Activated CD4-positive, alpha-beta T cell treated with anti-CD3 and anti-CD28 coated beads, Interleukin-2, amount 10 ng/mL, durations not matched to agents 7 days and 5 days (primary cell): ENCODE measurements at regions of chr2 and their contacts with region 1.

Region 1: DNA sequence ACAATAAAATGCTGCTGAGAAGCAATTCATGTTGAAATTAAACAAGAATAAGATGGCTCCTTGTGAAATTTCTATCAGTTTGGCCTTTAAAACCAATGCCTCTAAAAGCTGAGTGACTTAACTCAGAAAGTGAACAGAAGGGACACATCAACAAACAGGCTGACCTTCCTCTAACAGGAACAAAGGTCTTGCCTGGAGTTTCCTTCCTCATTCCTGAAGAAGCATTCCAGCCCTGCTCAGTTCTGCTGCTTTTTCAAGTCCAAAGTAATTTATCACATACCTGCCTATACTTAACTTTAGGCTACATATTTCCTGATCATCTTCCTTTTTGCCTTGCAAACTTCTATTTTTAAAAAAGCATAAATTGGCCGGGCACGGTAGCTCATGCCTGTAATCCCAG is 14.1 kb downstream of the PTRHD1 start:
- DNase-seq: no peak
- H3K4me3 Mint-ChIP-seq: no peak overlapping the region
- H3K27ac Mint-ChIP-seq: no peak overlapping the region
- H3K4me1 Mint-ChIP-seq: no peaks in the 10 kb centered on the region
- H3K27me3 Mint-ChIP-seq: peaks cover 11% of the 10 kb centered on the region

Region 2: GRCh38 chr2:24521975-24522639 is 257.0 kb before region 1 on chr2:
- CTCF ChIA-PET with region 1: no interaction called
- POLR2A ChIA-PET with region 1: no interaction called
- DNase-seq: no peak
- H3K4me3 Mint-ChIP-seq: no peak overlapping the region
- H3K27ac Mint-ChIP-seq: no peak overlapping the region
- H3K4me1 Mint-ChIP-seq: peaks cover 23% of the 10 kb centered on the region
- H3K27me3 Mint-ChIP-seq: no peaks in the 10 kb centered on the region

Region 3: GRCh38 chr2:24792874-24793760 is 14.0 kb after region 1 on chr2 and contains the starts of genes CENPO and PTRHD1:
- CTCF ChIA-PET with region 1: interaction called, 15 read pairs
- POLR2A ChIA-PET with region 1: interaction called, 3 read pairs
- DNase-seq: peak; percentile 97
- H3K4me3 Mint-ChIP-seq: peak within 1 kb of the TSS; percentile 87
- H3K27ac Mint-ChIP-seq: peak within 1 kb of the TSS; percentile 100
- H3K4me1 Mint-ChIP-seq: peaks cover 45% of the 10 kb centered on the region
- H3K27me3 Mint-ChIP-seq: no peaks in the 10 kb centered on the region
- total RNA-seq, gene CENPO: 52.0 to 56.4 TPM
- total RNA-seq, gene PTRHD1: 31.8 to 33.1 TPM

Region 4: DNA sequence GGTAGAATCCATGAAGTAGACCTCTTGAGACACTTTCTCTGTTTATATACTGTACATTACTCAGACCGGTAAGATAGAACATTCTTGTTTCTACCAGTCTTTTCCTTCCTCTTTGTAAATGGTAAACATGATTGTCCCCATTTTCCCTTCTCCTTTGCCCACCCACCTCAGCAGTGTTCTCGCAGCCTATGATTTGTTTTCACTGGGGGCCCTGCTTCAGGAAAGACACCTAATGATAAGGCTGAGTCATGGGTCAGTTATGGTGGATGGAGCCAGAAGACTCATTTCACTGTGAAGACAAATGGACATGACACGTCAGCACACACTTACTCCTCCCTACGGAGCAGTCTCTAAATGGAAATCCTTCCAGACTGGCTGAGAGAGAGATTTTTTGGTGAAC is 37.8 kb after region 1 on chr2:
- CTCF ChIA-PET with region 1: no interaction called
- POLR2A ChIA-PET with region 1: no interaction called
- DNase-seq: no peak
- H3K4me3 Mint-ChIP-seq: no peak overlapping the region
- H3K27ac Mint-ChIP-seq: no peak overlapping the region
- H3K4me1 Mint-ChIP-seq: no peaks in the 10 kb centered on the region
- H3K27me3 Mint-ChIP-seq: no peaks in the 10 kb centered on the region